ENCODE measurements at regions of chr11 and their contacts with region 1.

Region 1: DNA sequence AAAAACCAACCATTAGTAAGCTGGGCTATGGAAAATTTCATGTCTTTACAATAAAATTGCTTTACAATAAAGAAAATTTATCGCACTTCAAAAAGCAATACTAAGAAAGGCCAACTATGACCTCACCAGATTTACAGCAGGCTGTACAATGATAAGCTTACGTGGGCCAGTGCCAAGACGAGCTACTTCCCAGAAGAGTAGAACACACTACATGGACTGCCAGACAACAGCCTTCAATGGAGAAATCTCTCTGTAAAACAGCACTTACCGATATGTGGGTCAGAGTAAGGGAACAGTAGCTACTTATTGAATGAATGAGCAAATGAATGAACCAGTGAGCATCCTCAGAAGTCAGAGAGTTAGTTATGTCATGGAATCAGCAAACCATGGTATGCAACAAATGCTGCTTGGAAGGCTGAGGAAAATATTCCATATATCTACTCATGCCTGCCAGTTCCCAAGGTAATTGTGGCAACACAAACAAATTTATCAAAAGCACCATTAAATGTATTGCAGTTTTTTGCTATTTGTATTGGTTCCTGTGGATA is 74.4 kb downstream of the SLC36A4 start:
- DNase-seq: no peak
- H3K4me3 ChIP-seq: no peak overlapping the region
- H3K27ac ChIP-seq: no peak overlapping the region
- H3K4me1 ChIP-seq: no peaks in the 10 kb centered on the region
- H3K27me3 ChIP-seq: no peaks in the 10 kb centered on the region
- CTCF ChIP-seq: no peak
- POLR2A ChIP-seq: no peak

Region 2: DNA sequence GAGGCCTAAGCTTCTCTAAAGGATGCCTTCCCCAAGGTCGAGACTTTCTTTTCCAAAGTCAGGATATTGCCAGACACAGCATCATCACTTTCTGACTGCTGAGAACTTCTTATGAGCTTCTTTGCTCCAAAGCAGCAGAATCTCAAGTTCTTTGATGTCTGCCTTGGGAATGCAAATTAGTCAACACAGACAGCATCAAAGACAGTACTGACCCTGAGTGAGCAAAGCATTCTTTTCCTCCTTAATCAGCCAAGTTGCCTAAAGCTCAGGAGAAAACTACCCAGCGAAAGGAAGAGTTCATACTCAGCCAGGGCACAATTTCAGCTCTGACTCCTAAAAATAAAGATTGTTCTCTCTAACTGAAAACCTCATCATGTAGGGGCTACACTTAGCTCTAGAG is 23.6 kb before region 1 on chr11:
- intact Hi-C with region 1: loop called (anchors 1 kb)
- DNase-seq: no peak
- H3K4me3 ChIP-seq: no peak overlapping the region
- H3K27ac ChIP-seq: no peak overlapping the region
- H3K4me1 ChIP-seq: no peaks in the 10 kb centered on the region
- H3K27me3 ChIP-seq: no peaks in the 10 kb centered on the region
- CTCF ChIP-seq: no peak
- POLR2A ChIP-seq: no peak

Region 3: DNA sequence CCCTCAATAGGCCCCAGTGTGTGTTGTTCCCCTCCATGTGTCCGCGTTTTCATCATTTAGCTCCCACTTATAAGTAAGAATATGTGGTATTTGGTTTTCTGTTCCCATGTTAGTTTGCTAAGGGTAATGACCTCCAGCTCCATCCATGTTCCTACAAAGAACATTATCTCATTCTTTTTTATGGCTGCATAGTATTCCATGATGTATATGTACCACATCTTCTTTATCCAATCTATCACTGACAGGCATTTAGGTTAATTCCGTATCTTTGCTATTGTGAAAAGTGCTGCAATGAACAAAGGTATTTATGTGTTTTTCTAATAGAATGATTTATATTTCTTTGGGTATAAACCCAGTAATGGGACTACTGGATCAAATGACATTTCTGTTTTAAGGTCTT is 32.3 kb after region 1 on chr11:
- intact Hi-C with region 1: no loop called
- DNase-seq: no peak
- H3K4me3 ChIP-seq: no peak overlapping the region
- H3K27ac ChIP-seq: no peak overlapping the region
- H3K4me1 ChIP-seq: no peaks in the 10 kb centered on the region
- H3K27me3 ChIP-seq: no peaks in the 10 kb centered on the region
- CTCF ChIP-seq: no peak
- POLR2A ChIP-seq: no peak